ENCODE measurements at regions of chr12 and their contacts with region 1.

Region 1: DNA sequence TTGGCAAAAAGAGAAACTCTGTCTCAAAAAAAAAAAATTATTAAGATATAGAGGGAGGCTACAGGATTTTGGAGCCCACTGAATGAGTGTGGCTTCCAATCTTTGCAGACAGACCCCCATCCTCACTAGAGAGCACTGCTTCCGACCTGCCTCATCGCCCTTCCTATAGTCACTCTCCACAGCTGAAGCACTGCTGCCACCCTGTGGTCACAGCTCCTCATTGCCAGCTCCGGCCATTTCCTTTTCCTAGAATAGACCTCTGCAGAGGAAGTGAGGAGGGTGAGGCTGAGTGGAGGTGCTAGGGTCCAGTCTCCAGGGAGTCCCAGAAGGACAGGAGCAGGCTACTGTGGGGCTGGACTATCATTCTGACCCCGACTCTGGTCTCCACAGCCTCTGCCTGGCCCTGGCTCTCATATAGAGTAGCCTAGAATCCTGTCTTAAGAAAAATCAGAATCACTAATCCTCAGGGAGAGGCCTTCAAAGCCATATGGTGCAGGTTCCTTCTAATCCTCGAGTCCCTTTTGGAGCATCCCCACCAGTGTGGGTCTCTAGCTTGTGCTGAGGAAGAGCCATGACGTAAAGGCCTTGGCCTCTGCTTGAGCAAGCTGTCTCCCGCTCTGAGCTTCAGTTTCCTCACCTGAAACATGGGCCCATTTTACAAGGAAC is 1.4 kb upstream of the NPFF start:
- H3K4me3 Mint-ChIP-seq: no peak overlapping the region
- H3K27ac Mint-ChIP-seq: peak overlapping the region; percentile 29
- H3K4me1 Mint-ChIP-seq: peaks cover 21% of the 10 kb centered on the region
- H3K27me3 Mint-ChIP-seq: no peaks in the 10 kb centered on the region

Region 2: DNA sequence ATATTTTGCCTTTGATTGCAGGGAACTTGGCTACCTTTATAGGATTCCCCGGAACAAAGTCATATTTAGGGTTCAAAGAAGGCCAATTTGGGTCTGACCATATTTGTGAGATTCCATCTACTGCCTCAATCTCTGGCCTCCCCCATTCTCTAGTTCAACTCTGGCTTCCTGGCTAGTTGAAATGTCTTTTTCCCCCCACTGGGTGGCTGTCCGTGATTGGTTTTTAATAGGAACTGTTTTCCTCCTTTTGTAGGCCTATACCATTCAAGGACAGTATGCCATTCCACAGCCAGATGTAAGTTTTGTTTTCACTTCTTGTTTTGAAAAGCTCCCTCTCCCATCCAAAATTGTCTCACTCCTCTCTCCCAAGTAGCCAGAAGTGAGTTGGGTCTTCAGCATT is 43.0 kb before region 1 on chr12:
- intact Hi-C with region 1: loop called (anchors 5 kb)
- H3K4me3 Mint-ChIP-seq: peak overlapping the region; percentile 30
- H3K27ac Mint-ChIP-seq: peak overlapping the region; percentile 74
- H3K4me1 Mint-ChIP-seq: peaks cover 52% of the 10 kb centered on the region
- H3K27me3 Mint-ChIP-seq: no peaks in the 10 kb centered on the region

Measured in dendritic cell treated with granulocyte-macrophage colony-stimulating factor and Interleukin-4, amounts not matched to agents 40 ng/mL and 50 ng/mL, for 4 days (primary cell).